GM18951 (cell line): ENCODE measurements at regions of chr5 and their contacts with region 1.

Region 1: DNA sequence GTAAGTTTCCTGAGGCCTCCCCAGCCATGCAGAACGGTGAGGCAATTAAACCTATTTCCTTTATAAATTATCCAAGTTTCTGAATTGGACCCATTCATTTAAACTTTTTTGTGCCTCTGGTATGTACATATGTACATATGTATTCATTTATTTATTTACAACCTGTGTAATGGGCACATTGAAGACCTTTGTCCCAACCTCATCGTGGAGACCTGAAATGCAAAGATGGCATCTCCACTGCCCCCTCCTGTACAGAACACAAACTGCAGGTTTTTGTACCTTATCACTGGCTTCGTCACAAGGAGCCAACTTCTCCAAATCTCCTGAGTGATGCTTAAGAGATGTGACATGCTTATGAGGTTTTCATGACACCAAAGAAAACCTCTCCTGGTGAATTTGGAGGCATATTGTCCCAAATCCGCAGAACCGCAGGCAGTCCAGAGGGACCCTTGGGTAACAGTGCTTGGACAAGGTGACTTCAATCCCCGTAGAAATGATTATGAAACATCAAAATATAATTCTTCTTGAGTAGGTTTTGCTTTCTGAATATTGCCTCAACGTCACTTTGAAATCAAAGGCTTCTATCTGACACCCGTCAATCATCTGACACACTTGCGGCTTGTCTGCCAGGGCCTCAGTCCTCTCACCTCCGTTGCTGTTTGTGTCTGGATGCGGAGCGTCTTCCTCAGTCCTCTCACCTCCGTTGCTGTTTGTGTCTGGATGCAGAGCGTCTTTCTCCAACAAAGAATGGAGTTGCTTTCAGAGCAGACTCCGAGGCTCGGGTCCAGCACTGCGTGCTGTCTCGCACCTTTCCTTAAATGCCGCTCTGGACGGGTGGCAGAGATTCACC is 135.0 kb upstream of the IRX4 start:
- POLR2A ChIP-seq: no peak

Region 2: DNA sequence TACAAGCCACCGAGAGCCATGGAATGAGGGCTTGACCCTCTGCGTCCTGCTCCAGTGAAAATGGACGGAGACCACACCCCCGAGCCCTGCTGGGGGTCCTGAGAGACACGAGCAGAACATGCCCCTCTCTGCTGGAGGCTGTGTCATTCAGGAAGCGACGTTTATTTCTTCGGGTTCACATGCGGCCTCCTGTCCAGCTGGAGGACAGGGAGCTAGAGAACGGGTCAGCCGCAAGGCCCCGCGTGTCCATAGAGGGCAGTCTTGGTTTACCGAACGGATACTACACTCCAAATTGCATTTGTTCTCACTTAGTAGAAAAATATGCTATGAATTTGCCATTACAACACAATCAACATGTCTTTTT is 254.2 kb before region 1 on chr5:
- in situ Hi-C with region 1: loop called (anchors 25 kb)
- POLR2A ChIP-seq: no peak

Region 3: DNA sequence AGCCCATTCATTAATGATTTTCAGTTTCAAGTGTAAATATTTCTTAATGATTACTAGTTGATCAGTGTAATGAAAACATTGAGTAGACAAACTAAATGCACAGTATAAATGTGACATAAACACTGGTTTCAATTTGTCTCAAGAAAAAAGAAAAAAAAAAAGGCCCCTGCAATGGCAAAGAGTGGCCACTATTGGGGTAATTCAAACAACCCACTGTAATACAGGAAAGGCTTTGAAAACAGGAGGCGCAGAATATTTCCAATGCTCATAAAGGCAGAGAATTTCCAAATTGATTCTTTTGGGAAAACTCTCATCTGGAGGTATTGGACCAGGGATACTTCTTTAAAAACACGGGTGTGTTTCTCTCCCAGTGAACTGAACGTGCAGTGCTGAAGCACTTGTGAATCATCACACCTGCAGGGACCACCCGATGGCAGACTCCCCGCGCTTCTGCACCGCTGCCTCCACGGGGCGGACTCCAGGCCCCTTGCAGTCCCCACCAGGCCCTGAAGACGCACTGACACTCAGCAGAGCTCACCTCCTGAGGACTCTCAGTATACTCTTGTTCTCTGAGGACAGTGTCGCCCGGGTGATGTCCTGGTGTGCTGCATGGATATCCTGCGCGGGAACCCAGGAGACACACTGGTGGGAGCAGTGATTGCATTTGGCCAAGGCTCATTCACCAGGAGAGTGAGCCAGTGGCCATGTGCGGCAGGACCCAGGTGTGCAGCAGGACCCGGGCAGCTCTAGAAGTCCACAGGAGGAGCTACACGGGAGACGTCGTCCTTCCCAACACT is 92.6 kb after region 1 on chr5:
- in situ Hi-C with region 1: no loop called
- POLR2A ChIP-seq: no peak

Region 4: DNA sequence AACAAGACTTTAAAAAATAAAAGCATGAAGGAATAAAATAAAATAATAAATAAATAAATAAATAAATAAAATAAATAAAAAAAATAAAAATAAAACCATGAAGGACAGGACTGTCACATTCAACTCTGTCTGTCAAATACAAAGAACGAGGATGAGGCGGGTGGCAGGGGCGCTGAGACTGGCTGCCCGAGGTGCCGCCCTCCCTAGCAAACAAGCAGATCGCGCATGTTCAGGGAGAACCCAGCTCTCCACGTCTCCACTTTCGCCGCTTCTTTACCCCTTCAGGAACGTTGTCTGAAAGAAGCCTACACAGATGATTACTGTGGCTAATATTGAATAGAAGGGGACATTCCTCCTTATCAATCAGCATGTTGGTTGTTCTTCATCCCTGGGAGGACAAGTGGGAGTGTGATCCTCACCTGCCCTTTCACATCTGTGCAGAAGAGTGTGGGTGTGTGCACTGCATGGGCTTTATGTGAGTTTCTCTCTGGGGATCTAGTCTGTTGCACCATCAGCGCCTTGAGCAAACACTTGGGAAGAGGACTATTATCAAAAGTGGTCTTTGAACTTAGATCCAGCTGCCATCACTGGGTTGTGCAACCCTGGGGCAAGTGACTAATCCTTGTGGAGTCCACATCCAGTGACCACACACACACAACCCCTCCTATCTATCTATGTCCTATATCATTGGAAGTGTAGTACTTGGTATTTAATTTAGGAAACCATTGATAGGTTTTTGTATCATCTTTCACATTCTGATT is 334.5 kb after region 1 on chr5:
- in situ Hi-C with region 1: no loop called
- POLR2A ChIP-seq: no peak